Activated CD8-positive, alpha-beta memory T cell treated with anti-CD3 and anti-CD28 coated beads, Interleukin-2, amount 10 ng/mL, durations not matched to agents 7 days and 5 days (primary cell): ENCODE measurements at regions of chr22 and their contacts with region 1.

Region 1: GRCh38 chr22:22168190-22168940 is 76.2 kb upstream of the VPREB1 start:
- DNase-seq: no peak
- ATAC-seq: peak; percentile 61
- H3K4me3 Mint-ChIP-seq: peak overlapping the region; percentile 60
- H3K27ac Mint-ChIP-seq: peak overlapping the region; percentile 73
- H3K4me1 Mint-ChIP-seq: peaks cover 12% of the 10 kb centered on the region
- H3K27me3 Mint-ChIP-seq: peaks cover 36% of the 10 kb centered on the region

Region 2: GRCh38 chr22:22156716-22157347 is 11.5 kb before region 1 on chr22:
- CTCF ChIA-PET with region 1: interaction called, 14 read pairs
- DNase-seq: peak; percentile 82
- ATAC-seq: peak; percentile 87
- H3K4me3 Mint-ChIP-seq: no peak overlapping the region
- H3K27ac Mint-ChIP-seq: peak overlapping the region; percentile 17
- H3K4me1 Mint-ChIP-seq: peaks cover 5% of the 10 kb centered on the region
- H3K27me3 Mint-ChIP-seq: peaks cover 19% of the 10 kb centered on the region

Region 3: DNA sequence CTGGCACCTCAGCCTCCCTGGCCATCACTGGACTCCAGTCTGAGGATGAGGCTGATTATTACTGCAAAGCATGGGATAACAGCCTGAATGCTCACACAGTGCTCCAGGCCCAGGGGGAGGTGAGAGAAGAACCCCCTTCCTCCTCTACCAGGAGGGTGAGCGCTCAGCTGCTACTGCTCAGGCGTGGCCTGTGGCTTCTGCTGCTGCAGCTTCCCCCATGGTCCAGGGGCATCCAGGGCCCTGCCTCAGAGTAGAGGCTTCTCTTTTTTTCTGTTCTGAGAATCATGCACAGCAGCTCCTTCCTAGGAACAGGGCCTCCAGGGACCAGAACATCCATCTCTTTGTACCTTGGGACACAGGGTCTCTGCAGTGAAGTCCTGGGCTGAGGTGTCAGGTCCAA is 159.4 kb after region 1 on chr22:
- CTCF ChIA-PET with region 1: no interaction called
- DNase-seq: no peak
- ATAC-seq: no peak
- H3K4me3 Mint-ChIP-seq: no peak overlapping the region
- H3K27ac Mint-ChIP-seq: no peak overlapping the region
- H3K4me1 Mint-ChIP-seq: peaks cover 5% of the 10 kb centered on the region
- H3K27me3 Mint-ChIP-seq: peaks cover 21% of the 10 kb centered on the region